Cardiac septum (tissue), 1 donor: ENCODE measurements at regions of chr12 and their contacts with region 1.

Region 1: DNA sequence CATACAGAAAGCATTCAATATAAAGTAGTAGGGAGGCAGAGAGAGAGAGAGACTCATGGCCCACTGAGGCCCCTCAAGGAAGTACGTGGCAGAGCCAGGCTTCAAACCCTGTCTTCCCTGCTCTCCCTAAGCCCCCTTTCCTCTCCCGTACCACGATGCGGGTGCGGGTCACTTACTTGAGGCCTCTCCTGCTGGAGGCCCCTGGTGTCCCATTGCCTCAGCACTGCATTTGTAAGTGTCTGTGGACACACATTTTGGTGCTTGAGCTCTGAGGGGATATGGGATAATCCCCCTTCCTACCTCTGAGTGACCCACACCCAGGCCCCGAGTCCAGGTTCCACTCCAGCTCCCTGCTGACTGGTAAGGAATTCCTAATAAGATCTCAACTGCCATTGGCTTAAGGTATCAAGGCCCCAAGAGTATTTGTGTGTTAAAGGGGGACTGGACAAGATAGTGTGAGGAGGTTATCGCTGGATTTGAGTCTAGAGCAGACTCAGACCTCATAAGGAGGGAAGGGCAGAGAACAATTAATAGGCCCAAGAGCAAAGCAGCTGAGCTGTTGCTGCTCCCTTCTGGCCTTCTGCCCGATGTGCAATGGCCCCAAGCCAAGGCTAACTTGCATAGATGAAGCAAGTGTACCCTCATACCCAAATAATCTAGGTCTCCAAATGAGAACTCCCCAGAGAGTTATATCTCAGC is 71.9 kb downstream of the CRACR2A start:
- DNase-seq: no peak

Region 2: DNA sequence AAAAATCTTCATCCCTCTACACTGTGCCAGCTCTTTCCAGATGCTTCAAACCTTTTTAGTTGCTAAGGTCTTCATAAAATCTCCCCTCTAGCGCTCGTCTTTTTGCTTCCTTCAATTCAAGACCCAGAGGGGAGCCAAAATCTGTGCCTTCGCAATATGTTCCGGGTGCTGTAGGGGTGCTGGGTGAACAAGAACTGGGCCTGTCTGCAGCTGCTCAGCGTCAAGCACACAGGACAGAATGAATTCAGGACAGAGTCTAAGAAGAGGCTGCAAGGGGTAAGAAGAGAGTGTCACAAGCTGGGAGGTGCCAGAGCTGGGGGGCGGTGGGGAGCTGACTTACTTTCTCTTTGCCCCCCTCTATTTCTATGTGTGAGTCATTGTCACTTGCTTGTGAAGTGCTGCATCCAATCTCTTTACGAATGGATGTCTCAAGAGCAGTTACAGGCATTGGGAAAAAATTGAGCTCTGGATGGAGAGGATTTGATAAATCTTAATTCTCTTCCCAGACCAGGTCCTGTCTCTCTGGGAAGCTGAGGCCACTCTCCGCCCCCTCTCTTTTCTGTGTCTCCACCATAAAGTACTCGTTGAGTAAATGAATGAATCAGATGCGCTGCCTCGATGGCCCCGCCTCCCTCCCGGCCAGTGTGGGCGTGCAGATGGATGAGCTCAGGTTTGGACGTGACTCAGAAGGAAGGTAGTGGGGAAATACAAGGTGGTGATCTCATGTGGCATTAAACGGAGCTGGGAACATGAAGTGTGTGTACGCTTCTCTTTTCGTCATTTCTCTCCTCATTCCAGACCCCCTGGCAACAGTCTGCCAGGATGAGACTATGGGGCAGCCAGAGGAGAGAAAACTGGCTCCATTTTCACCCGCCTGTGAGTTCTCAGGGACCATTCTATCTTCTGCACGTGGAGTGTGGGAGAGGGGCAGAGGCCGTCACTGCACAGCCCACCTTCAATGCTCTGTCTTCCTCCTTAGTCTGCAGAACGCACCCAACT is 512.5 kb before region 1 on chr12:
- intact Hi-C with region 1: no loop called
- DNase-seq: no peak

Region 3: GRCh38 chr12:3533703-3534386 is 147.2 kb before region 1 on chr12:
- intact Hi-C with region 1: loop called (anchors 2 kb)
- DNase-seq: no peak

Region 4: GRCh38 chr12:3718100-3718499 is 37.1 kb after region 1 on chr12:
- intact Hi-C with region 1: no loop called
- DNase-seq: peak; percentile 94

Region 5: DNA sequence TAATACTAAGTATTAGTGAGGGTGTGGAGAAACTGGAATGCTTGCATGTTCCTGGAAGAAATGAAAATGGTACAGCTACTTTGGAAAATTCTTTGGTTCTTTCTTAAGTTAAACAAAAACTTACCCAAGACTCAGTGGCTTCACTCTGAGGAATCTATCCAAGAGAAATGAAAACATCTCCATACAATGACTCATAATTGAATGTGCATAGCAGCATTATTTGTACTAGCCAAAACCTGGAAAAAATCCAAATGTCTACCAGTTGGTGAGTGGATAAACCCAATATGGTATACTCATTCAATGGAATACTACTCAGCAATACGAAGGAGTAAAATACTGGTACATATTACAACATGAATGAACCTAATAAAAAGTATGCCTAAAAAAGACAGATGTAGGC is 89.8 kb after region 1 on chr12:
- intact Hi-C with region 1: loop called (anchors 5 kb)
- DNase-seq: no peak